Upper lobe of right lung (tissue), 1 donor: ENCODE measurements at regions of chr2 and their contacts with region 1.

Region 1: GRCh38 chr2:71685078-71685848 is 231.9 kb downstream of the DYSF start:
- DNase-seq: peak; percentile 59
- ATAC-seq: no peak
- H3K4me3 ChIP-seq: no peak overlapping the region
- H3K27ac ChIP-seq: no peak overlapping the region
- H3K4me1 ChIP-seq: no peaks in the 10 kb centered on the region
- H3K27me3 ChIP-seq: no peaks in the 10 kb centered on the region
- CTCF ChIP-seq: no peak

Region 2: DNA sequence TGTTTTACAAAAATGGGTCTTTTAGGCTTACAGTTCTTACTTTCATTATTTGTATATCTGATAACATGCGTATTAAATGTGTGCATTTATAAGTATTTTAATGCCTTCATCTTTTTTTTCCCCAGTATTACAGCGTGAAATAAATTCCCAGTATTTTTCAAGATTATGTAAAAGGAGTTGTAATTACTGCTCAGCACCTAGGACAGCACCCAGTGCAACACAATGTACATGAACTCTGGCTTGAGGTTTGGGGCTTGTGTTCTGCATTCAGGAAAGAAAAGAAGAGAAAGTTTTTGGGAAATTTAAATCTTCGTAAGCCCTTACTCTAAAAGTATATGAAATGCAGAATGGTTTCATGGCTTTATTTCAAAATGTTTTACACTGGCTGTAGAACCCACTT is 337.0 kb before region 1 on chr2:
- intact Hi-C with region 1: no loop called
- DNase-seq: no peak
- ATAC-seq: no peak
- H3K4me3 ChIP-seq: no peak overlapping the region
- H3K27ac ChIP-seq: no peak overlapping the region
- H3K4me1 ChIP-seq: no peaks in the 10 kb centered on the region
- H3K27me3 ChIP-seq: no peaks in the 10 kb centered on the region
- CTCF ChIP-seq: no peak

Region 3: GRCh38 chr2:71614976-71615766 is 70.1 kb before region 1 on chr2:
- intact Hi-C with region 1: no loop called
- DNase-seq: peak; percentile 69
- ATAC-seq: peak; percentile 64
- H3K4me3 ChIP-seq: no peak overlapping the region
- H3K27ac ChIP-seq: peak overlapping the region; percentile 67
- H3K4me1 ChIP-seq: peaks cover 24% of the 10 kb centered on the region
- H3K27me3 ChIP-seq: no peaks in the 10 kb centered on the region
- CTCF ChIP-seq: no peak

Region 4: DNA sequence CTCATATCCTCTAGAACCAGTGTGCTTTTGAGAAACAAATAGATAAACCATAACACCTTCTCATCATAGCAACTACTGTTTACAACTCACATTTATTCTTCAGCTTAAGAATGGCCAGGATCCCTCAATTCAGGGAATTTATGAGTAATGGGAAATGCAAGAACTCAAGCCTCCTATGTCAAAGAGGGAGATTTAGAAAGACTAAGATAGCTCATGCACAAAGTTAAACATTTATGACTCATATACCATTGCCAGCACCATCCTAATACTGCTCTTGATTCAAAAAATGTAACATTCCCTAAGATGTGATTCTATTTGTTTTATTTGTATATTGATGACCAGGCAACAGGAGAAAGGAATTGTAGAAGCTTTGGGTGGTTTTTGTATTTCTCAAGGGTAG is 289.6 kb after region 1 on chr2:
- intact Hi-C with region 1: no loop called
- DNase-seq: no peak
- ATAC-seq: no peak
- H3K4me3 ChIP-seq: no peak overlapping the region
- H3K27ac ChIP-seq: no peak overlapping the region
- H3K4me1 ChIP-seq: no peaks in the 10 kb centered on the region
- H3K27me3 ChIP-seq: peaks cover 8% of the 10 kb centered on the region
- CTCF ChIP-seq: no peak

Region 5: GRCh38 chr2:72953976-72954375 is 1268.7 kb after region 1 on chr2:
- intact Hi-C with region 1: loop called (anchors 10 kb)
- DNase-seq: no peak
- ATAC-seq: no peak
- H3K4me3 ChIP-seq: no peak overlapping the region
- H3K27ac ChIP-seq: no peak overlapping the region
- H3K4me1 ChIP-seq: no peaks in the 10 kb centered on the region
- H3K27me3 ChIP-seq: no peaks in the 10 kb centered on the region
- CTCF ChIP-seq: no peak